ENCODE measurements at regions of chrX and their contacts with region 1.

Region 1: GRCh38 chrX:71181910-71182799 is 37.5 kb downstream of the NLGN3 start:
- DNase-seq: peak; percentile 97
- ATAC-seq: peak; percentile 95
- H3K4me3 ChIP-seq: peak overlapping the region; percentile 69
- H3K27ac ChIP-seq: peak overlapping the region; percentile 68
- H3K4me1 ChIP-seq: peaks cover 11% of the 10 kb centered on the region
- H3K27me3 ChIP-seq: no peaks in the 10 kb centered on the region
- CTCF ChIP-seq: no peak

Region 2: GRCh38 chrX:70769659-70770232 is 412.4 kb before region 1 on chrX:
- CTCF ChIA-PET with region 1: interaction called, 5 read pairs
- POLR2A ChIA-PET with region 1: no interaction called
- intact Hi-C with region 1: loop called (anchors 1 kb)
- DNase-seq: peak; percentile 43
- ATAC-seq: no peak
- H3K4me3 ChIP-seq: no peak overlapping the region
- H3K27ac ChIP-seq: no peak overlapping the region
- H3K4me1 ChIP-seq: no peaks in the 10 kb centered on the region
- H3K27me3 ChIP-seq: peaks cover 8% of the 10 kb centered on the region; the same call in 1 of the 2 replicates
- CTCF ChIP-seq: peak; percentile 61

Region 3: GRCh38 chrX:70970482-70970995 is 211.6 kb before region 1 on chrX:
- CTCF ChIA-PET with region 1: no interaction called
- POLR2A ChIA-PET with region 1: no interaction called
- intact Hi-C with region 1: loop called (anchors 1 kb)
- DNase-seq: peak; percentile 49
- ATAC-seq: no peak
- H3K4me3 ChIP-seq: no peak overlapping the region
- H3K27ac ChIP-seq: no peak overlapping the region
- H3K4me1 ChIP-seq: no peaks in the 10 kb centered on the region
- H3K27me3 ChIP-seq: peaks cover 4% of the 10 kb centered on the region; the same call in 1 of the 2 replicates
- CTCF ChIP-seq: peak; percentile 61; the same call in 1 of the 2 replicates

Region 4: DNA sequence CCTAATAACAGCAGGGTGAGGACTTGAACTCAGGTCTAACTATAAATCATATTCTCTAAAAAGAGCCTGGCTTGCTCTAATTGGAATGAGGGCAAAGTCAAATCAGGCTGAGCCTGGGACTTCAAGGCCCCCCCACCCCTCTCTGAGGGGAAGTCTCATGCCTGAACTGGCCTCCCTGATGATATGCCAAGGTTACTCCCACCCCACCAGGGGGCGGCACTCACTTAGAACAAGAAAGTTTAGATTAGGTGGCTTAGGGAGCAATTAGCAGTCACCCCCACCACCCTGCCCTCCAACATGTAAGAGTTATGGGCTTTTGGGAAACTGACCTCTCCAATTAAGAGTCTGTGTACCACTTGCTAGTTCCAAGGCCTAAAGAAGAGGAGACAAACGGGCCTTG is 83.9 kb before region 1 on chrX:
- CTCF ChIA-PET with region 1: no interaction called
- POLR2A ChIA-PET with region 1: no interaction called
- intact Hi-C with region 1: loop called (anchors 1 kb)
- DNase-seq: peak; percentile 42
- ATAC-seq: no peak
- H3K4me3 ChIP-seq: no peak overlapping the region
- H3K27ac ChIP-seq: no peak overlapping the region
- H3K4me1 ChIP-seq: peaks cover 5% of the 10 kb centered on the region
- H3K27me3 ChIP-seq: no peaks in the 10 kb centered on the region
- CTCF ChIP-seq: peak; percentile 62

Region 5: DNA sequence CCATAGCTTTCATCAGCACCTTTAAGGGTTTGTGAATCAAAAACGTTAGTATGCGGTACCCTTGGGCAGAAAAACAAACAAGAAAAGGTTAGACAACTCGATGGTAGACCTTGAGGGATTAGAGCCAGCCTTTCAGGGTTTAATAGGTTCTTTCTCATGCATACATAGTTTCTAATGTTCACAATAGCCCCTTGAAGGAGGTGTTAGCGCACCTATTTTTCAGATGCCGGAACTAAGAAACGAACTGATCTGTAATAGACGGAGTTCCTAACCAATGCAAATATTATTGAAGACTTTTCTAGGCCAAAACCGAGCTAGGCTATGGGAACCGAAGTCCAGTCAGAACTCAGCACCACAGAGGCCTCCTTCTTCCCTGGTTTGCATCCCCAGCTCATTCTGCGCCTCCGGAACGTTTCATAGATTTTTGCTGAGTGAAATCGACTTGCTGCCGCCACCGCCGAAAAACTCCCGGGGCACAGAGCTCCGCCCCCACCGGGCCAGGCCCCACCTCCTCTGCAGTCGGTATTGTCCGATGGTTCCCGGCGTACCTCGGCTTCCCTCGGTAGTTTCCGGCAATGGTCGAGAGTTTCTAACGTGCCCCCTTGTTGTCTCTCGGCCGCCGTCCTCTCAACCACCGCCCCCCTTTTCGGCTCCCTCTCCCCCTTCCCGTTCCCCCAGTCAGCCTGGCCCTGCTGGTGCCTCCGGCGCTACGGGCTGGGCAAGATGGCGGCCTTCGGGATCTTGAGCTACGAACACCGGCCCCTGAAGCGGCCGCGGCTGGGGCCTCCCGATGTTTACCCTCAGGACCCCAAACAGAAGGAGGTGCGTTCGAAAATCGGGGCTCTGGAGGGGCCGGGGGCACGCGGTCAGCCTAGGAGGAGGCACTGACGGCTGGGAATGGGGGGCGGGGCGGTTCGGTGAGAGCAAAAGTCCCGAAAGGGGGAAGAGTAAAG is 63.8 kb before region 1 on chrX and contains the start of gene MED12:
- CTCF ChIA-PET with region 1: no interaction called
- POLR2A ChIA-PET with region 1: no interaction called
- intact Hi-C with region 1: no loop called
- DNase-seq: peak; percentile 67
- ATAC-seq: peak; percentile 97
- H3K4me3 ChIP-seq: peak within 1 kb of the TSS; percentile 94
- H3K27ac ChIP-seq: peak within 1 kb of the TSS; percentile 29
- H3K4me1 ChIP-seq: peaks cover 9% of the 10 kb centered on the region; the same call in 1 of the 2 replicates
- H3K27me3 ChIP-seq: no peaks in the 10 kb centered on the region
- CTCF ChIP-seq: no peak
- total RNA-seq, gene MED12: 28.1 and 45.8 TPM in 2 replicates

Region 6: GRCh38 chrX:71151920-71152319 is 30.2 kb before region 1 on chrX:
- CTCF ChIA-PET with region 1: no interaction called
- POLR2A ChIA-PET with region 1: no interaction called
- intact Hi-C with region 1: no loop called
- DNase-seq: no peak
- ATAC-seq: no peak
- H3K4me3 ChIP-seq: no peak overlapping the region
- H3K27ac ChIP-seq: no peak overlapping the region
- H3K4me1 ChIP-seq: no peaks in the 10 kb centered on the region
- H3K27me3 ChIP-seq: no peaks in the 10 kb centered on the region
- CTCF ChIP-seq: no peak

Region 7: DNA sequence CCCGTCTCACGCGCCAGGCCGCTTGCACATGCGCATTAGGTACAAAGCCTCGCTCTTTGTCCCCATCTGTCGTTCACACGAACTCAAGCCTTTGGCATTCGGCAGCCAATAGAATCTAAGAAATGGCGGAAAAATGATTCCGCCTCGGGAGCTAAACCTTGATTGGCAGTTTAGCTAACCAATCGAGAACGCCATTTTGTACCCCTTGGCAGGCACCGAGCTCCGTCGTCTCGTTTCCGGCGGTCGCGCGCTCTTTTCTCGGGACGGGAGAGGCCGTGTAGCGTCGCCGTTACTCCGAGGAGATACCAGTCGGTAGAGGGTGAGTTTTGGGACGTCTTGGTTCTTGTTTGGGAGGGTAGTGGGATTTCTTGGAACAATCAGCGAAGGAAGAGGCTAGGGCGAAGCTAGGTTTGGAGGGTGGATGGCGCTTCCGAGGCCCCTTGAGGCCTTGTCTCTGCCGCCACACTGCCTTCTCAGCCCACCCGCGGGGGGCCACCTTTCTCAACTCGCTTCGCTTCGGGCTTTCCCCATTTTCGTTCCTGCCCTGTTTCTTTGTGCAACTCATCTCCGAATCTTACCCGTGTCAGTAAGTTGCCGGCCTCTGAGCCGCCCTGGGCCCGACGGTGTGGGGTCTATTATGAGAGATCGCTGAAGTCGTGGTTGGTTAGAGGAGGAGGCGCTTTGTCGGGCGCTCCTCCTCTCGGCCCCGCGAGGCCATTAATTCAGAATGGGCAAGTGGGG is 101.4 kb after region 1 on chrX and contains the start of gene NONO:
- CTCF ChIA-PET with region 1: no interaction called
- POLR2A ChIA-PET with region 1: interaction called, 6 read pairs
- intact Hi-C with region 1: loop called (anchors 10 kb)
- DNase-seq: peak; percentile 99
- ATAC-seq: peak; percentile 85
- H3K4me3 ChIP-seq: peak within 1 kb of the TSS; percentile 94
- H3K27ac ChIP-seq: peak within 1 kb of the TSS; percentile 74
- H3K4me1 ChIP-seq: peaks cover 7% of the 10 kb centered on the region
- H3K27me3 ChIP-seq: no peaks in the 10 kb centered on the region
- CTCF ChIP-seq: peak; percentile 17; the same call in 1 of the 2 replicates
- total RNA-seq, gene NONO: 514 and 631 TPM in 2 replicates

Region 8: GRCh38 chrX:71365876-71366673 is 183.9 kb after region 1 on chrX and contains the start of gene TAF1:
- CTCF ChIA-PET with region 1: no interaction called
- POLR2A ChIA-PET with region 1: interaction called, 14 read pairs
- intact Hi-C with region 1: no loop called
- DNase-seq: peak; percentile 96
- ATAC-seq: peak; percentile 93
- H3K4me3 ChIP-seq: peak within 1 kb of the TSS; percentile 86
- H3K27ac ChIP-seq: peak within 1 kb of the TSS; percentile 95
- H3K4me1 ChIP-seq: peaks cover 11% of the 10 kb centered on the region
- H3K27me3 ChIP-seq: no peaks in the 10 kb centered on the region
- CTCF ChIP-seq: no peak
- total RNA-seq, gene TAF1: 36.8 and 45.2 TPM in 2 replicates

Measured in PC-3 (cell line).